Posterior cingulate gyrus (tissue), 11 donors: ENCODE measurements at regions of chr15 and their contacts with region 1.

Region 1: GRCh38 chr15:40941528-40942336 is 11.5 kb upstream of the CHAC1 start:
- DNase-seq: peak in 9 of 10 donors; percentile 46 to 94 (median 67)

Region 2: DNA sequence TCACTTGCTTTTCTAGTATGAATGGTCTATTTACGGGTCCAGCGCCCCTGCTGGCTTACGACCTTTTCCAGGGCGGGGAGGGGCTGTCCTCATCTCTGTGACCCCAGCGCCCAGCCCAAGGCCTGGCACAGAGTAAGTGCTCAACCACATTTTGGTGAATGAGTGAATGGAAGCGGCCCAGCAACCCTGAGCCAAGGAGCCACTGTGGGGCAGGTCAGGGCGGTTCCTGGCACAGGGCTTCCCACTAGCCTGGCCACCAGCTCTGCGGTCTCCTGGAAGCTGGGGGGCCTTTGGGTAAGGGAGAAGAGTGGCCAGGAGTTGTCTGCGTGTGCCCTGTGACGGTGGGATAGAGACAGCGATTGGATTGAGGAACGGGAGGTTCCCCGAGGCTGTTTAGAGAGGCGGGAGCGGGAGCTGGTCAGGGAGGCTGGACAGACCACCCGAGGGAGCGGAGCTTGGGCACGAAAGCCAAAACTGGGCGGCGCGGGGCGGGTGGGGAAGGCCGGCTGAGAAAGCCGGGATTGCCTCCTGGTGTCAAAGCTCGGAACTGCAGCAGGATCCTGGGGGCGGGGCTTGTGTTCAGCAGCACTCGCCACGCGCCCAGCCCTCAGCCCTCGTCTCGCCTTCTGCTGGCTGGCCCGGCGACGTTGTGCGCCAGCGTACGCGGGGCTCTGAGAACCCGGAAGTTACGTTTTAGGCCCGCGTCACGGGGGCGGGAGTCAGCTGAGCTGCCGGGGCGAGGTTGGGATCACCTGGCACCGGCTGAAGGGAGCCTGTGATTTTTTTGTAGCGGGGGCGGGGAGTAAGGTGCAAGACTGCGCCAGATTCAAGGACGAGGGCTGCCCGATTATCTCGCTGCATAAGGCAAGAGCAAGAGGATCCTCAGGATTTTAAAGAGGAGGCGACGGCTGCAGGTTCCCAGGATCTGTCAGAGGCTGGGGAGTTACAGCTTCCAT is 47.7 kb before region 1 on chr15 and contains the start of gene VPS18:
- intact Hi-C with region 1: no loop called
- DNase-seq: peak; percentile 99 to 100 (median 99)

Region 3: GRCh38 chr15:41022487-41023090 is 80.9 kb after region 1 on chr15:
- intact Hi-C with region 1: loop called (anchors 5 kb)
- DNase-seq: peak in 5 of 10 donors; percentile 30 to 88 (median 45)